Head of caudate nucleus (tissue), 42 donors: ENCODE measurements at regions of chr20 and their contacts with region 1.

Region 1: GRCh38 chr20:57530327-57530981 is 5.5 kb upstream of the CTCFL start:
- DNase-seq: no peak

Region 2: GRCh38 chr20:57579898-57580447 is 49.5 kb after region 1 on chr20:
- intact Hi-C with region 1: loop called (anchors 5 kb)
- DNase-seq: no peak